Naive thymus-derived CD4-positive, alpha-beta T cell (primary cell): ENCODE measurements at regions of chr6 and their contacts with region 1.

Region 1: GRCh38 chr6:28080631-28081485 is 490 bp downstream of the ZNF165 start:
- DNase-seq: peak; percentile 89 to 94 (median 93)
- ATAC-seq: peak; percentile 85
- H3K4me3 ChIP-seq: peak overlapping the region; percentile 99
- H3K4me3 Mint-ChIP-seq: peak overlapping the region; percentile 87 to 99 (median 98)
- H3K27ac ChIP-seq: peak overlapping the region; percentile 97
- H3K27ac Mint-ChIP-seq: peak overlapping the region; percentile 84 to 99 (median 98)
- H3K4me1 ChIP-seq: peaks cover 6 to 7% of the 10 kb centered on the region in 2 donors
- H3K4me1 Mint-ChIP-seq: peaks cover 12 to 27% (median 16%) of the 10 kb centered on the region in 7 donors
- H3K27me3 ChIP-seq: no peaks in the 10 kb centered on the region
- H3K27me3 Mint-ChIP-seq: peaks cover 0 to 3% (median 0%) of the 10 kb centered on the region in 5 donors

Region 2: DNA sequence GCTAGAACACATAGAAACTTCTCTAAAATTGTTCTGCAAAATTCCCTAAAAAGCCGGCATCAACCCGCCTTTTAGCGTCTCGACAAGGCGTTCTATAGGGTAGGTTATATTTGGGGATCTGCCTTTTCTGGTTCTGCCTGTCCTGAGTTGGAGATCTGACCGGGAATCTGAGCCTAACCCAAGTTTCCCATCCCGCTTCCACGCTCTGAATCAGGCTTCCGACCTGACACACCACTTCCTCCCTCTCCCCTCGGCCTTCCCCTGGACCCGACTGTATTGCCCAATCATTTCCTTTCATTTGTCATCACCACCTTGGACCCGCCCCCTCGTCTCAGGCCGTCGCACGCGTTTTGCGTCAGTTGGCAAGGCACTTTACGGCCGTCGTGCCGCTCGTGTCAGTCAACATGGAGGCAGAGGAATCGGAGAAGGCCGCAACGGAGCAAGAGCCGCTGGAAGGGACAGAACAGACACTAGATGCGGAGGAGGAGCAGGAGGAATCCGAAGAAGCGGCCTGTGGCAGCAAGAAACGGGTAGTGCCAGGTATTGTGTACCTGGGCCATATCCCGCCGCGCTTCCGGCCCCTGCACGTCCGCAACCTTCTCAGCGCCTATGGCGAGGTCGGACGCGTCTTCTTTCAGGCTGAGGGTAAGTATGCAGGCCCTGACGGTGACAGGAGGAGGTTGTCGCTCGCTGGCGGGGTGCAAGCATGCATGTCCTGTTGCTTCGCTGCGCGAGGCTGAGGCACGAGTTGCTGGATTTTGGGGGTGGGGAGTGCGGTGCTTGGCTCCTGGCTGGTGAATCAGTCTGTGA is 1484.1 kb before region 1 on chr6 and contains the start of gene ABT1:
- CTCF ChIA-PET with region 1: no interaction called
- POLR2A ChIA-PET with region 1: no interaction called
- intact Hi-C with region 1: loop called in 1 of 2 experiments (anchors 10 kb)
- DNase-seq: peak; percentile 87 to 96 (median 95)
- ATAC-seq: peak; percentile 95
- H3K4me3 ChIP-seq: peak within 1 kb of the TSS; percentile 81
- H3K4me3 Mint-ChIP-seq: no peak within 1 kb of the TSS
- H3K27ac ChIP-seq: peak within 1 kb of the TSS; percentile 89
- H3K27ac Mint-ChIP-seq: peak within 1 kb of the TSS in 1 of 9 donors; percentile 92
- H3K4me1 ChIP-seq: peaks cover 17 to 22% of the 10 kb centered on the region in 2 donors
- H3K4me1 Mint-ChIP-seq: peaks cover 5 to 20% (median 10%) of the 10 kb centered on the region in 7 donors
- H3K27me3 ChIP-seq: peaks cover 8 to 14% of the 10 kb centered on the region in 2 donors
- H3K27me3 Mint-ChIP-seq: peaks cover 3 to 28% (median 16%) of the 10 kb centered on the region in 5 donors
- total RNA-seq, gene ABT1: 23.3 to 37.5 (median 35.0) TPM

Region 3: DNA sequence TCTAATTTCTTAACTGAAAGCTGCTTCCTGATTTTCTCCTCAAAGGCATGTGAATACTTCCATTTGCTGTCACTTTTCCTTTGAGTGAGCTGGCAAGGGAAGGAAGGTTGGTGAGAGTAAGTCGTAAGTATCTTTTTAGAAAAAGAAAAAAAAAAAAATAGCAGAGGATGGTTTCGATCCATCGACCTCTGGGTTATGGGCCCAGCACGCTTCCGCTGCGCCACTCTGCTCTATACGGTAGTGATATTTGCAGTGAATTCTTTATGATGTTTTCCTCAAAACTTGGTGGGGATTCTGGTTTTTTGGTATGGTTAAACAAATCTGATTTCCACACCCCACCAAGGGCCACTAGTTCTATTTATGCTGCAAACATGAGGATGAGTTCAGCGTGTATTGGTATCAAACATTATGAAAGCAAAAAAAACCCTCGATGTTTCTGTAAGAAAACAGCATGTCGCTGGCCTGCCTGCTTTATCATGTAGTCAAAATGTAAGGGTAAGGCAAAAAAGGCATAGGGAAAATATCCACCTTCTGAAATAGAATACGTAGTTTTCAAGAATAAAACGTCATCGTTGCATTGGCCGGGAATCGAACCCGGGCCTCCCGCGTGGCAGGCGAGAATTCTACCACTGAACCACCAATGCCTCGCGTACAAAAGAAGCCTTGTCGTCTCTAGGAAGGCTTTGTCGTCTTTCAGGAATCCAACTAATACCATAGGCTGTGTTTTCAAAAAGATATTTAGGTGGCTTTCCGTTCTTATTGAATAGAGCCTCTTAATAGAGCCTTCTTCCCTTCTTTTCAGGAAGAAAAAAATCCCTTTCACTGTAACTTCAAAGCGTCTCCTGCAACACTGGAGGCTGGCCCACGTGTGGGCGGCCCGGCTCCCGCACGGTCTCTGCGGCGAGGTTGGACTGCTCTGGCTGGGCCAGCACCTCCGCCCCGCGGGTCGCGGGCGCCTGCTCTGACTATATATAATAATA is 178.2 kb before region 1 on chr6:
- CTCF ChIA-PET with region 1: no interaction called
- POLR2A ChIA-PET with region 1: no interaction called
- intact Hi-C with region 1: loop called in 1 of 2 experiments (anchors 2 kb)
- DNase-seq: peak; percentile 75 to 94 (median 90)
- ATAC-seq: peak; percentile 92
- H3K4me3 ChIP-seq: peak overlapping the region; percentile 95
- H3K4me3 Mint-ChIP-seq: peak overlapping the region; percentile 75 to 97 (median 91)
- H3K27ac ChIP-seq: peak overlapping the region; percentile 82
- H3K27ac Mint-ChIP-seq: peak overlapping the region; percentile 95 to 99 (median 99)
- H3K4me1 ChIP-seq: peaks cover 0 to 3% of the 10 kb centered on the region in 2 donors
- H3K4me1 Mint-ChIP-seq: peaks cover 0 to 26% (median 15%) of the 10 kb centered on the region in 7 donors
- H3K27me3 ChIP-seq: no peaks in the 10 kb centered on the region
- H3K27me3 Mint-ChIP-seq: peaks cover 4 to 35% (median 13%) of the 10 kb centered on the region in 5 donors

Region 4: GRCh38 chr6:28167068-28167467 is 86.2 kb after region 1 on chr6:
- CTCF ChIA-PET with region 1: no interaction called
- POLR2A ChIA-PET with region 1: no interaction called
- intact Hi-C with region 1: no loop called
- DNase-seq: no peak
- ATAC-seq: no peak
- H3K4me3 ChIP-seq: no peak overlapping the region
- H3K4me3 Mint-ChIP-seq: no peak overlapping the region
- H3K27ac ChIP-seq: no peak overlapping the region
- H3K27ac Mint-ChIP-seq: no peak overlapping the region
- H3K4me1 ChIP-seq: no peaks in the 10 kb centered on the region
- H3K4me1 Mint-ChIP-seq: peaks cover 3 to 8% (median 5%) of the 10 kb centered on the region in 7 donors
- H3K27me3 ChIP-seq: no peaks in the 10 kb centered on the region
- H3K27me3 Mint-ChIP-seq: peaks cover 0 to 14% (median 8%) of the 10 kb centered on the region in 5 donors

Region 5: GRCh38 chr6:28252009-28252975 is 171.4 kb after region 1 on chr6 and contains the start of gene ZKSCAN4:
- CTCF ChIA-PET with region 1: no interaction called
- POLR2A ChIA-PET with region 1: interaction called, 3 read pairs
- intact Hi-C with region 1: loop called (anchors 1 to 2 kb)
- DNase-seq: peak; percentile 44 to 86 (median 78)
- ATAC-seq: peak; percentile 96
- H3K4me3 ChIP-seq: peak within 1 kb of the TSS; percentile 100
- H3K4me3 Mint-ChIP-seq: peak within 1 kb of the TSS; percentile 84 to 100 (median 98)
- H3K27ac ChIP-seq: peak within 1 kb of the TSS; percentile 55
- H3K27ac Mint-ChIP-seq: peak within 1 kb of the TSS; percentile 85 to 98 (median 92)
- H3K4me1 ChIP-seq: peaks cover 14 to 18% of the 10 kb centered on the region in 2 donors
- H3K4me1 Mint-ChIP-seq: peaks cover 21 to 53% (median 39%) of the 10 kb centered on the region in 7 donors
- H3K27me3 ChIP-seq: no peaks in the 10 kb centered on the region
- H3K27me3 Mint-ChIP-seq: peaks cover 0 to 4% (median 0%) of the 10 kb centered on the region in 5 donors
- total RNA-seq, gene ZKSCAN4: 2.8 to 11.8 (median 8.7) TPM

Region 6: DNA sequence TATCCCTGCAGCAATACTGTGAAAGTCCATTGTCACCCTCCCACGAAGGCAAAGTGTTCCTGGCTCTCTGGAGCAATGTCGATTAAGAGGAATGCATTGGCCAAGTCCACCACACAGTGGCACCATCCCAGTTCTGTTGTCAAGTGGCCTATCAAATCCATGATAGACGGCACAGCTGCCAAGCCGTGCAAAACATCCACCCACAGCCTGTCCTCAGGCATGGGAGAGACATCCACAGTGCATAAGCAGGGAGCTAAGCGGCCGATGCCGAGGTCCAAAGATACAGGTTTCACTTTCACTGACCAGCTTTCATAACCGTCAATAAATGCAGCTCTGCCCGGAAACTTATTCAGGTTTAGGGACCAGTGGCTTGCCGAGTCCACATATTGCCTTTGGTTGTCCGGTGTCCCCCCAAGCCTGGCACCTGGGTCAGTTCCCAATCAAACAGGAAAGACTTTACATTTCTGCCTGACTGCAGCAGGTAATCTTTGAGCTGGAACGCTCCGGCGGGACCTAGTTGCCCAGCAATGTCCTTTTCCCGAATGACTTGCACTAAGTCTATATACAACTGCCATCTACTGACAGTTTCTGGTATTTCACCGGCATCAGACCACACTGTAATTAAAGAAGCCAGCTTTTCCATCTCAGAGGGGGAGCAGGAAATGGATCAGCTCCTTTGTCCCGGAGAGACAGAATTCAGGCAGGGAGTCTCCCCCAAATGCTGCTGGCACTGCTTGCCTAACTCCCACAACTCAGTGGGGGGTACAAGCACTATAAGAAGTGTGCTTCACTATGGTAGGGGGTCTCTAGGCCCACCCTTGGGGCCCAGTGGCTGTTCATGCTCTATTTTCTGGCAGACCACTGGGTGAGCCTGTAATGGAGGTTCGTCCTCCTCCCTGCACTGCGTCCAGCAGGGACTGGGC is 275.1 kb after region 1 on chr6:
- CTCF ChIA-PET with region 1: no interaction called
- POLR2A ChIA-PET with region 1: no interaction called
- intact Hi-C with region 1: loop called (anchors 1 to 2 kb)
- DNase-seq: peak; percentile 26 to 69 (median 54)
- ATAC-seq: peak; percentile 92
- H3K4me3 ChIP-seq: peak overlapping the region; percentile 69
- H3K4me3 Mint-ChIP-seq: peak overlapping the region; percentile 78 to 96 (median 92)
- H3K27ac ChIP-seq: no peak overlapping the region
- H3K27ac Mint-ChIP-seq: peak overlapping the region; percentile 21 to 89 (median 62)
- H3K4me1 ChIP-seq: peaks cover 0 to 7% of the 10 kb centered on the region in 2 donors
- H3K4me1 Mint-ChIP-seq: peaks cover 16 to 38% (median 34%) of the 10 kb centered on the region in 7 donors
- H3K27me3 ChIP-seq: no peaks in the 10 kb centered on the region
- H3K27me3 Mint-ChIP-seq: no peaks in the 10 kb centered on the region

Region 7: GRCh38 chr6:28895134-28895812 is 814.4 kb after region 1 on chr6:
- CTCF ChIA-PET with region 1: no interaction called
- POLR2A ChIA-PET with region 1: no interaction called
- intact Hi-C with region 1: loop called in 1 of 2 experiments (anchors 5 kb)
- DNase-seq: peak; percentile 72 to 95 (median 91)
- ATAC-seq: peak; percentile 83
- H3K4me3 ChIP-seq: peak overlapping the region; percentile 82
- H3K4me3 Mint-ChIP-seq: peak overlapping the region; percentile 92 to 100 (median 98)
- H3K27ac ChIP-seq: peak overlapping the region; percentile 99
- H3K27ac Mint-ChIP-seq: peak overlapping the region; percentile 98 to 100 (median 100)
- H3K4me1 ChIP-seq: peaks cover 5 to 6% of the 10 kb centered on the region in 2 donors
- H3K4me1 Mint-ChIP-seq: peaks cover 0 to 32% (median 14%) of the 10 kb centered on the region in 7 donors
- H3K27me3 ChIP-seq: no peaks in the 10 kb centered on the region
- H3K27me3 Mint-ChIP-seq: peaks cover 0 to 15% (median 0%) of the 10 kb centered on the region in 5 donors